ENCODE measurements at regions of chr11 and their contacts with region 1.

Region 1: DNA sequence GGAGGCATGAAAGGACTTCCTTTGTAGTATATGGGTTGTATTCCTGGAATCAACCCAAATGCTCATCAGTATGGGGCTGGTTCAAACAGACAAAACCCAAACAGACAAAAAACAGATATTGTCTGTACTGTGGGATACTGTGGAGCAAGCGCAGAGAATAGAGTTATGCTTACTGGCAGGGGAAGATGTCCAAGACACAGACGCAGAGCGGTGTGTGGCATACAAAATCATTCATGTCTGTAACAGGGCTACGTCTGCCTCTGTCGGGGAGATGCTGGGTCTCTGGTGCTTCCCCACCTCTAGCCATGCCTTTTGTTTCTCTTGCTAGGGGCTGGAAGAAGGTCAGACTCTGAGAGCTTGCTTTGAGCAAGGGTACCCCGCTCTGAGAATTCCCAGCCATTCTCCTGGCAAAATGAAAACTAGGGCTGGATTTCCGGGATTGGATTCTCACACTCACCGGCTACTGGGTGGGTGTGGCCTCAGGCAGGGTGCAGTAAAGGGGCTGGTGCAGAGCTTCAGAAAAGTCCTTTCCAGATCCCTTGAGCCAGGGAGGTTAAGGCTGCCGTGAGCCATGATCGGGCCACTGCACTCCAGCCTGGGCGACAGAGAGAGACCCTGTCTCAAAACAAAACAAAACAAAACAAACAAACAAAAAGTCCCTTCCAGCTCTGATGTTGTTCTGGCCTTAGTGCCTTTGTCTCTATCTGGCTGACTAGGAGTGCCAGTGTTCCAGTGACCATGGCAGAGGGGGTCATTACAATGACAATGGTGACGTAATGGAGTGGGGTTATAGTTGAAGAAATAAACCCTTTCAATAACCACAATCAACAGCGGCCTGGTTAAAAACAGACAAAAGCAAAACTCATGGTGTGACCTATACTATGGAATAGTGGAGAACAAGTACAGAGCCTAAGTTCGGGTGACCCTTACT is 2.9 kb upstream of the ABCC8 start:
- DNase-seq: peak; percentile 31
- ATAC-seq: peak; percentile 45
- H3K4me3 ChIP-seq: no peak overlapping the region
- H3K27ac ChIP-seq: no peak overlapping the region
- H3K4me1 ChIP-seq: no peaks in the 10 kb centered on the region
- H3K27me3 ChIP-seq: peaks cover 33% of the 10 kb centered on the region
- CTCF ChIP-seq: no peak

Region 2: DNA sequence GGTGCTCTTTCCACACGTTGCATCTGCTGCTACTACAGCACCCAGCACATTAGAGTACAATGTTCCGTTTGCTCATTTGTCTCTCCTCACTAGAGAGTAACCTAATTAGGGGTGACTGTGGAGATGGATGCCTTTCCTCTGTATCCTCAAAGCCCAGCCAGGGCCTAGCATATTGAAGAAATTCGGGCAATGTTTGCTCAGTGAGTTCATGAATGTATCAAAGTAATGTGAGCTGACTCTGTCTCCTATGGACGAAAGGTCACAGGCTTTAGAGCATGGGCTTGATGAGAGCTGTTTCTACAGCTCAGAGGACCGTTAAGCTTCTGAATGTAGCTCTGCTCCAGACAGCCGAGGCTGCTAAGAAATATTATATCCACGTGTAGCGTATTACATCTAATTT is 673.6 kb before region 1 on chr11:
- CTCF ChIA-PET with region 1: no interaction called
- POLR2A ChIA-PET with region 1: interaction called, 10 read pairs
- intact Hi-C with region 1: no loop called
- DNase-seq: peak; percentile 81
- ATAC-seq: peak; percentile 94
- H3K4me3 ChIP-seq: no peak overlapping the region
- H3K27ac ChIP-seq: no peak overlapping the region
- H3K4me1 ChIP-seq: peaks cover 38% of the 10 kb centered on the region
- H3K27me3 ChIP-seq: no peaks in the 10 kb centered on the region
- CTCF ChIP-seq: no peak

Region 3: GRCh38 chr11:17389211-17389956 is 90.2 kb before region 1 on chr11:
- CTCF ChIA-PET with region 1: no interaction called
- POLR2A ChIA-PET with region 1: no interaction called
- intact Hi-C with region 1: loop called (anchors 1 kb)
- DNase-seq: peak; percentile 56
- ATAC-seq: peak; percentile 68
- H3K4me3 ChIP-seq: peak overlapping the region; percentile 74
- H3K27ac ChIP-seq: no peak overlapping the region
- H3K4me1 ChIP-seq: peaks cover 2% of the 10 kb centered on the region; the same call in 1 of the 2 replicates
- H3K27me3 ChIP-seq: no peaks in the 10 kb centered on the region
- CTCF ChIP-seq: peak; percentile 47

Region 4: DNA sequence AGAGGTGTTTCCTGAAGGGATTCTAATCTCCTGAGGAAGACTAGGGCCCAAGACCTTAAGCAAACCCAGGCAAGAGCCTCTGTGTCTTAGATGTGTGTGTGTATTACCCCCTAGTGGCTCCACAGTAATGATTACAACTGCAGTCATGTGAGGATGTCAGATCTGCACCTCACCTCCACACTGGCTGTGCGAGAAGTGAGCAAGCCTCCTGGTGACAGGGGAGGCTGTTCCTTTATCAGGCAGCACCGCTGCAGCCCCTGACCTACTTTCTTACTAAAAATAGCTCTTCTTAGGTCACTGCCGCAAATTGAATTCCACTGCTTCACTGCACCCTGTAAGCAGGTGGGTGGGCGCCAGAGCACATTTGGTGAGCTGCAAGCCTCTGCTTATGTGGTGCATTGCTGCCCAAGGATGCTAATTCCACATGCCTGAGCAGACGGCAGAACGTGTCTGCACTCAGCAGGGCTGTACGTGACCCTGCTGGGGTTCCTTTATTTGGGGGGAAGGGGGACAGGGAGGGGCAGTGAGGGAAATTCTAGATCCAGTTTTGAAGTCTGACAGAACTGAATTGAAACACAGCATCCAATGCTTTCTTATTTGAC is 367.4 kb after region 1 on chr11:
- CTCF ChIA-PET with region 1: no interaction called
- POLR2A ChIA-PET with region 1: no interaction called
- intact Hi-C with region 1: no loop called
- DNase-seq: peak; percentile 53
- ATAC-seq: peak; percentile 59
- H3K4me3 ChIP-seq: no peak overlapping the region
- H3K27ac ChIP-seq: peak overlapping the region; percentile 97
- H3K4me1 ChIP-seq: peaks cover 31% of the 10 kb centered on the region
- H3K27me3 ChIP-seq: no peaks in the 10 kb centered on the region
- CTCF ChIP-seq: peak; percentile 64

Measured in PC-3 (cell line).